Calu3 (cell line): ENCODE measurements at regions of chr7 and their contacts with region 1.

Region 1: DNA sequence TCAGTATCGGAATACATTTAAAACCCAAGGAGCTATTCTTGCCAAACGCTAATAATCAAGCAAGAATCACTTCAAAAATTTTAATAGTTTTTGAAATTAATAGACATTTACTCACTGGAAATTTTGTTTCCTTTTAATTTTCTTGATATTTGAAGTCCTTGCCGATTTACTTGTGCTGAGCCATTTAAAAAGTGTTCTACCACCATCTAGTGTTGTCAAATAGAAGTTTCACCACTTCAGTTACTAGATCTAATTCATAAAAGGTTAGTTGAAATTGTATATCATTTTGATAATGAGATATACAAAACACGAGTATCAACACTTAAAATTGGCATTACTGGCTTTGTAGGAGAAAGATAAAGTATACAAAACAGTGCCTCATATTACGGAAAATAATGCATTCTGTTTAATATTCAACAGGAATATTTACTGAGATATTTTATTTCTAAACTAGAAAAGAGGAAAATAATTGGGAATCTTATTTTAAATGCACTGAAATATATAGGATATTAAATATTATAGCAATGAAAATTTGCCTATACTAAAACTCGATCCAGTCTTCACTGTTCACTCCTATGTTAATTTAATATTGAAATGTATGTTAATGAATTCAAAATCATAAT is 664.8 kb upstream of the SEMA3D start:
- DNase-seq: no peak
- H3K4me3 Mint-ChIP-seq: no peak overlapping the region
- H3K27ac Mint-ChIP-seq: no peak overlapping the region
- H3K4me1 Mint-ChIP-seq: no peaks in the 10 kb centered on the region
- H3K27me3 Mint-ChIP-seq: no peaks in the 10 kb centered on the region
- CTCF ChIP-seq: peak; percentile 14

Region 2: DNA sequence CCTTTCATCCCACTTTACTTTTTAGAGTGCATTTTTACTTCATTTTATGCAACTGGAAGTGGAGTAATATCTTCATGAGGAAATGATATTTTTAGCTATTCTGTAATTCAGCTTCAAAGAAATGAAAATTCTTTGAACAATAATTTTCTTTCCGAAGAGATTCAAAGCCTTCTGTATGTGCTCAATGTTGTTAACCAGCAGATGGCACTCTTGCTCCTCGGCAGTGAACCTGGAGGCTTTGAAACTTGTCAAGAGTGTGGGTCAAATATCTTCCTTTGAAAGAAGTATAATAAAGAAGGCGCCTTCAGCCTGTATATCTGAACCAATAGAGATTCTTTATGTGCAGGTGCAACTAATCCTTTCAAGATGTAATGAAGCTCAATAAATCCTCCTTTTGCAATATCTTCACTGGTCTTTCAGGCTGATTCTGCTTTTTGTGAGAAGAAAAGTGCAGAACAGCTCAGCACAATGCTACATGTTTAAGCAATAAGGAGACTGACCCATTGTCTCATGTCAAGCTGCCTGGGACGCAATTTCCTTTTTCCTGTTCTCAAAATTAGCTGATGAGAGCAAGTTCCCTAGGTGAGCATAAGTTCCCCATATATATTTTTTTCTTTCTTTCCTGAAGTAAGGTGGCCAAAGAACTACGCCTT is 1915.5 kb before region 1 on chr7:
- CTCF ChIA-PET with region 1: no interaction called
- intact Hi-C with region 1: loop called (anchors 10 kb)
- DNase-seq: peak; percentile 56
- H3K4me3 Mint-ChIP-seq: no peak overlapping the region
- H3K27ac Mint-ChIP-seq: no peak overlapping the region
- H3K4me1 Mint-ChIP-seq: peaks cover 6% of the 10 kb centered on the region
- H3K27me3 Mint-ChIP-seq: no peaks in the 10 kb centered on the region
- CTCF ChIP-seq: peak; percentile 57

Region 3: GRCh38 chr7:85030893-85031292 is 820.8 kb before region 1 on chr7:
- CTCF ChIA-PET with region 1: no interaction called
- intact Hi-C with region 1: loop called (anchors 1 kb)
- DNase-seq: no peak
- H3K4me3 Mint-ChIP-seq: no peak overlapping the region
- H3K27ac Mint-ChIP-seq: no peak overlapping the region
- H3K4me1 Mint-ChIP-seq: no peaks in the 10 kb centered on the region
- H3K27me3 Mint-ChIP-seq: no peaks in the 10 kb centered on the region
- CTCF ChIP-seq: no peak

Region 4: DNA sequence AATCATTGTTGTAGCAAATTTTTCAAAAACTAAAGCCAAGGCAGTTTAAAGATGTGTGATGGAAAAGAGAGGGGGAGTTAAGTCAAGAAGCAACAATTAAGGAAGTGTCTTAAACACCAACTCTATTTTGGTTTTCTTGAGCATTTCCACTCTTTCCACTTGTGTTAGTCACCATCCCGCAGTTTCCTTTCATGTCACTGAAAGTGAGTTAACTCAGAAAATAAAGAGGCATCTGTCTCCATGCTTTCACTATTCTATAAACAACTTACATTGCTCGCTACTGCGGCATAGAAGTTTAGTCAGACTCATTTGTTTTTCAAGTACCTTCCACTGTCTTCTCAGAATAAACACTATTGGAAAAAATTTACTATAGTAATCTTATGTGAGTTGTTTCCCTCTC is 379.9 kb before region 1 on chr7:
- CTCF ChIA-PET with region 1: no interaction called
- intact Hi-C with region 1: no loop called
- DNase-seq: no peak
- H3K4me3 Mint-ChIP-seq: no peak overlapping the region
- H3K27ac Mint-ChIP-seq: no peak overlapping the region
- H3K4me1 Mint-ChIP-seq: no peaks in the 10 kb centered on the region
- H3K27me3 Mint-ChIP-seq: no peaks in the 10 kb centered on the region
- CTCF ChIP-seq: no peak